GM12878 (cell line): ENCODE measurements at regions of chr1 and their contacts with region 1.

Region 1: DNA sequence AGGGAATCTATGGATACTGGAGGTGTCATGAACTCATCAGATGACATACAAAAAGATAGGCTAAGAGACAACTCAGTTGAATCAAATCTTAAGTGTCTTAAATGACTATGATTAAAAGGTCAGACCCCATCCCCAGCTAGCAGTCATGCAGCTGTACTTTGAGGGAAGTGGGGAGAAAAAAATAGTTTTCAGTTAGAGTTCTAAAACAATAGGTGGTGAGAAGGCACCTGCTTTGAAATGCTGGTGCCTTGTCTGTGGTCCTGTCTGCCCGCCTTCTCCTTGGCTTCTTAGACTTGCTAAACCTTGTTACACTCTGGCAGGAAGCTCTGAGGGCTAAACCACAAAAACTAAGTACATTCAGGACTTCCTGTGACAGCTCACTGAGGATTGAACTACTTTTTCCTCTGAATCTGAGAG is 15.3 kb downstream of the CD2 start:
- DNase-seq: peak; percentile 68
- ATAC-seq: peak; percentile 80
- H3K4me3 ChIP-seq: peak overlapping the region; percentile 6; the same call in 1 of the 2 replicates
- H3K27ac ChIP-seq: peak overlapping the region; percentile 40; the same call in 1 of the 2 replicates
- H3K4me1 ChIP-seq: peaks cover 21% of the 10 kb centered on the region
- H3K27me3 ChIP-seq: no peaks in the 10 kb centered on the region
- CTCF ChIP-seq: no peak
- EP300 ChIP-seq: 0 out of 4 replicates have a peak, but pooled peaks of 1 of the 2 experiments have one; percentile 39
- POLR2A ChIP-seq: no peak
- RAD21 ChIP-seq: no peak; the same call in 1 of the 2 replicates

Region 2: DNA sequence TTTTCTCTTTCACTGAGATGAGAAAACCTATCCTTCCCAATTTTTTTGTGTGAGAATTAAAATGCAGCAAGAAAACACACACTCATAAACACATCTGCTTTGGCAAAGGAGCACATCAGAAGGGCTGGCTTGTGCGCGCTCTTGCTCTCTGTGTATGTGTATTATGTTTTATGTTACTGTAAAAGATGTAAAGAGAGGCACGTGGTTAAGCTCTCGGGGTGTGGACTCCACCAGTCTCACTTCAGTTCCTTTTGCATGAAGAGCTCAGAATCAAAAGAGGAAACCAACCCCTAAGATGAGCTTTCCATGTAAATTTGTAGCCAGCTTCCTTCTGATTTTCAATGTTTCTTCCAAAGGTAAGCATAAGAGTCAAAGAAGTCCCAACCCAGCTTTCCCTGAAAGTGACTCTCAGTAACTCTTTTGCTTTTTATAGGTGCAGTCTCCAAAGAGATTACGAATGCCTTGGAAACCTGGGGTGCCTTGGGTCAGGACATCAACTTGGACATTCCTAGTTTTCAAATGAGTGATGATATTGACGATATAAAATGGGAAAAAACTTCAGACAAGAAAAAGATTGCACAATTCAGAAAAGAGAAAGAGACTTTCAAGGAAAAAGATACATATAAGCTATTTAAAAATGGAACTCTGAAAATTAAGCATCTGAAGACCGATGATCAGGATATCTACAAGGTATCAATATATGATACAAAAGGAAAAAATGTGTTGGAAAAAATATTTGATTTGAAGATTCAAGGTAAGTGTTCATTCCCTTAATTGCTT is 15.2 kb before region 1 on chr1 and contains the start of gene CD2:
- CTCF ChIA-PET with region 1: interaction called, 23 read pairs
- POLR2A ChIA-PET with region 1: interaction called, 7 read pairs
- RAD21 ChIA-PET with region 1: interaction called, 6 read pairs
- SMC1A ChIA-PET with region 1: interaction called, 21 read pairs
- in situ Hi-C with region 1: no loop called
- intact Hi-C with region 1: no loop called
- DNase-seq: no peak
- ATAC-seq: no peak; the same call in 2 of the 3 replicates
- H3K4me3 ChIP-seq: no peak within 1 kb of the TSS
- H3K27ac ChIP-seq: no peak within 1 kb of the TSS
- H3K4me1 ChIP-seq: no peaks in the 10 kb centered on the region
- H3K27me3 ChIP-seq: no peaks in the 10 kb centered on the region
- CTCF ChIP-seq: no peak
- EP300 ChIP-seq: no peak
- POLR2A ChIP-seq: no peak
- RAD21 ChIP-seq: no peak
- polyA plus RNA-seq, gene CD2: 3.0 to 4.3 TPM

Region 3: GRCh38 chr1:116794804-116795481 is 25.4 kb after region 1 on chr1:
- CTCF ChIA-PET with region 1: interaction called, 68 read pairs
- POLR2A ChIA-PET with region 1: interaction called, 8 read pairs
- RAD21 ChIA-PET with region 1: interaction called, 49 read pairs
- SMC1A ChIA-PET with region 1: interaction called, 72 read pairs
- in situ Hi-C with region 1: no loop called
- intact Hi-C with region 1: loop called (anchors 2 kb)
- DNase-seq: peak; percentile 87
- ATAC-seq: peak; percentile 96
- H3K4me3 ChIP-seq: peak overlapping the region; percentile 14; the same call in 1 of the 2 replicates
- H3K27ac ChIP-seq: peak overlapping the region; percentile 57
- H3K4me1 ChIP-seq: peaks cover 11% of the 10 kb centered on the region
- H3K27me3 ChIP-seq: no peaks in the 10 kb centered on the region
- CTCF ChIP-seq: no peak
- EP300 ChIP-seq: peak; percentile 71 to 87
- POLR2A ChIP-seq: no peak
- RAD21 ChIP-seq: no peak

Region 4: GRCh38 chr1:116817582-116818064 is 48.1 kb after region 1 on chr1:
- CTCF ChIA-PET with region 1: interaction called, 53 read pairs
- POLR2A ChIA-PET with region 1: interaction called, 8 read pairs
- RAD21 ChIA-PET with region 1: interaction called, 14 read pairs
- SMC1A ChIA-PET with region 1: interaction called, 19 read pairs
- in situ Hi-C with region 1: no loop called
- intact Hi-C with region 1: loop called (anchors 2 kb)
- DNase-seq: no peak
- ATAC-seq: peak; percentile 91
- H3K4me3 ChIP-seq: no peak overlapping the region
- H3K27ac ChIP-seq: no peak overlapping the region
- H3K4me1 ChIP-seq: peaks cover 4% of the 10 kb centered on the region; the same call in 1 of the 2 replicates
- H3K27me3 ChIP-seq: no peaks in the 10 kb centered on the region
- CTCF ChIP-seq: peak; percentile 76 to 78 (median 77)
- EP300 ChIP-seq: no peak
- POLR2A ChIP-seq: no peak
- RAD21 ChIP-seq: peak; percentile 90

Region 5: DNA sequence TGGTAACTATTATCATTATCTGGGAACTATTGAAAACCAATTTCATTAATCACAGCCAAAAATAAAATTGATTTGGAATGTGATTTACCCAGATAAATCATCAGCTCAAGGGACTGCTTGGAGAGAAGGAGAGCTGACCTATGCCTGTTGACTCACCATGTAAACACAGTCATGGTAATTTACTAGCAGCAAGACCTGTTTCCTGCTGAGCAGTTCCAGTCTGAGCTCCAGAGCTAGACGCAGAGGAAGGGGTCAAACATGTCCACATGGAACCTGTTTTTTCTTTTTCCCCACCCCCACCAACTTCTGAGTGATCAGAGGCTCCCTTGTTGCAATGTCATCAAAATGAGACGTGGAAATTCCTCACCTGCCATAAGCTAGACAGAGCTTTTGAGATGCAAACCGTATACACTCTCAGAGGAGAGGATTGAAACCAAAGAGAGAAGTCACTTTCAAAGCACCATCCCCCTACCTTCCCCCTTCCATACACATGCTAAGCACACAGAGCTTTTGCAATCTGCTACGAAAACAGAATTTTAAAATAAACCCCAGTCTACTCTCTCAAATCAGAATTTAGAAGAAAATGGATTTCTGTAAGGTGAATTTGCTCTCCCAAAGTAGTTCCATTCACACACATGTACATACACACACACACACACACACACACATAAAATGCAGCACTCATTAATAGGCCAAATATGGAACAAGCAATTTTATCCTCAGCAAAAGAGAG is 84.3 kb after region 1 on chr1:
- CTCF ChIA-PET with region 1: interaction called, 6 read pairs
- POLR2A ChIA-PET with region 1: interaction called, 4 read pairs
- RAD21 ChIA-PET with region 1: interaction called, 10 read pairs
- SMC1A ChIA-PET with region 1: interaction called, 9 read pairs
- in situ Hi-C with region 1: no loop called
- intact Hi-C with region 1: no loop called
- DNase-seq: no peak
- ATAC-seq: peak; percentile 81
- H3K4me3 ChIP-seq: no peak overlapping the region
- H3K27ac ChIP-seq: no peak overlapping the region
- H3K4me1 ChIP-seq: 0 out of 2 replicates have a peak, but pooled peaks cover 3% of the 10 kb centered on the region
- H3K27me3 ChIP-seq: no peaks in the 10 kb centered on the region
- CTCF ChIP-seq: no peak
- EP300 ChIP-seq: no peak
- POLR2A ChIP-seq: no peak
- RAD21 ChIP-seq: no peak